ENCODE measurements at regions of chr7 and their contacts with region 1.

Region 1: DNA sequence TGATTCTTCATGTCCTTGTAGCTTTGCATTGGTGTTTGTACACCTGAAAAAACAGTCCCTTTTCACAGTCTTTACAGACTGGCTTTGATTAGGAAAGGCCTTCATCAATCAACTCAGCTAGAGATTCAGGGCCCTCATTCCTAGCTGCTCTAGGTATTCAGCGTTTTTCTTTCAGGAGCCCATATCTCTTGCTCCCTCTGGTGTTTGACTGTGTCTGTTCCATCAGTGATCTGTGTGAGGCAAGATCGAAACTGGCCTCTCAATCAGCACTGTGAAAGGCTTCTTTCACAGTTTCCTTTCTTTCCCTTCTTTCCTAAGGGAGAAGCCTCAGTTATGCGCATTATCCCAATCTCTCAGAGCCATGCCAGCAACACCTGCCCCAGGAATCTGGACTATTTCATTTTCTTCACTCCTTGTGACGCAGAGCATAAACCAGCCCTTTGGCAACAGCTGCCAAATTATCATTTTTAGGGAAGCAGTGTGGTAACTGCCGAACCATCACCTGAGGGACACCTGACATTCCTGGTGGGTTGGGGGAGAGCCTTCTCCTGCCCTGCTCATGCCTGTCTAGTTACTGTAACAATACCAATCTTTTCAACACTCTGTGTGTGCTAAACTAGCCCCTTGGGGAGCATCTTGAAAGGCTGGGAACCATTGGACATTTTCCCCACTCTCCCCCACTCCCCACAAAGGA is 75.7 kb upstream of the CCDC71L start:
- DNase-seq: peak; percentile 61 to 68 (median 63)
- H3K4me3 ChIP-seq: no peak overlapping the region
- H3K4me3 Mint-ChIP-seq: peak overlapping the region in 5 of 8 donors; percentile 3 to 61 (median 57)
- H3K27ac ChIP-seq: no peak overlapping the region
- H3K27ac Mint-ChIP-seq: peak overlapping the region in 5 of 7 donors; percentile 18 to 86 (median 72)
- H3K4me1 ChIP-seq: peaks cover 7% of the 10 kb centered on the region
- H3K4me1 Mint-ChIP-seq: peaks cover 8 to 18% (median 13%) of the 10 kb centered on the region in 4 donors
- H3K27me3 ChIP-seq: no peaks in the 10 kb centered on the region
- H3K27me3 Mint-ChIP-seq: no peaks in the 10 kb centered on the region

Region 2: DNA sequence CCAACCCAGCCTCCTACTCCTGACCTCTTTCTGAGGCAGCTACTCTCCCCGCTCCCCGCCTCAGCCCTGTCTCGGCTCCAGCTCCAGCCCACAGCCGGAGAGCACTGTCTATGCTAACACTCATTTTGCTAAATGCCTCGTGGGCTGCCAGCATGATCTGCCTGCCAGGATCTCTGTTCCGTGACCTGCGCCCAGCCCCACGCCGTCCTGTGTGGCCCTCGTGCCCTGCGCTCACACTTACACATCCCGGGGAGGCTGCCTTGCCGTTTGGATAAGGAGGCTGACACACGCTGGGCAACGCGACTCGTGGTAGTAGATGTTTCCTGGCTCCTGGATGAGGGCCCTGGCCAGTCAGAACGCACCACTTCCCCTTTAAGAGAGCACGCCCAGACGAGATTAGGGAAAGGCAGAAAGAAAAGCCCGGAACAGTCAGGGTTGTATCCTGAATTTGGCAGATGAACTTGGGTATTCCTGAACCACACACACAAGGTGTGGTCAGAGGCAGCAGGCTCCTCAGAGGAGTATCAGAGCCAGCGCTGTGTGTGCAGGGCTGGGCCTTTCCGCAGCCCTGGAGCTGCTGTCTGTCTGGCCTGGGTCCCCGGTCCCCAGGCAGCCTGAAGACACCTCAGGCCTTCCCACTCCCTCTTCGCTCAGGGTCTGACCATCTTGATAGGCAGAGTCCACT is 1057.7 kb before region 1 on chr7:
- CTCF ChIA-PET with region 1: no interaction called
- POLR2A ChIA-PET with region 1: no interaction called
- intact Hi-C with region 1: no loop called
- DNase-seq: peak in 2 of 5 donors; percentile 17 to 27
- H3K4me3 ChIP-seq: peak overlapping the region; percentile 12 to 27
- H3K4me3 Mint-ChIP-seq: peak overlapping the region; percentile 86 to 95 (median 92)
- H3K27ac ChIP-seq: peak overlapping the region; percentile 83
- H3K27ac Mint-ChIP-seq: peak overlapping the region; percentile 90 to 99 (median 96)
- H3K4me1 ChIP-seq: peaks cover 63% of the 10 kb centered on the region
- H3K4me1 Mint-ChIP-seq: peaks cover 61 to 94% (median 74%) of the 10 kb centered on the region in 4 donors
- H3K27me3 ChIP-seq: no peaks in the 10 kb centered on the region
- H3K27me3 Mint-ChIP-seq: no peaks in the 10 kb centered on the region

Region 3: DNA sequence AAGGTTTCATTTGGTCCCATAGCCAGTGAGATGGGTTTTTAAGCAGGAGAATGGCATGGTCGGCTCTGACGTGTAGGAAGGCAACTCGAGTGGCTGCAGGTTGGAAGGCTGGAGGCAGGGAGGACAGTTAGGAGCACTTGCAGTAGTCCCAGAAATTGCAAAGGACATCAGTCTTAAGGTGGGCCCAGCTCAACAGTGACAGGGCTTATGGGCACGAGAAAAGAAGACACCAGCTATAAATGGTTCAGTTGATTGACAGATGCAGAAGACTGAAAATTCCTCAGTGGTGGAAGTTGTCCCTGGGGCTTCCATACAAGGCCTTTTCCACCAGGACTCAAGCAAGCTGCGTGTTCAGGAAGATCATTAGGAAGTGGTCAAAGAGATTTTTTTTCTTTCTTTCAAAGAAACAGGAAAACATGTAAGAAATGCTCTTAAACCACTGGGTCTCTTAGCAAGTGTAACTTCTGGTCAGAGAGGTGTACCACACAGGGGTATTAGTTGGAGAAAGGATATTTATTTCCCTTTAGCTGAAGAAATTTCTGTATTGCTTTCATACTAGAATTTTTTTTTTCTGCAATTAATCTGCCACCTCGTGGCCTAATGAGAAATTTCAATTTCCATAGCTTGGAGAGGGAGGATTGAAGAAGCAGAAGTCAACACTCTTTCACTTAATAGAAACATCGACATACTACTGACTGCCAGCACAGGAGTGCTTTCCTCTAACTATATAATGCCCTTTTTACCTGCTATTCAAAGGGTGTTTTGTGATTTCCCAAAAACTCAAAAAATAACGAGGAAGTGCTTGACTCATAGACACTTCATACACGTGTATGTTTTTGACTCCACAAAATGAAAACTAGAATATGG is 274.4 kb before region 1 on chr7:
- CTCF ChIA-PET with region 1: interaction called, 3 read pairs
- POLR2A ChIA-PET with region 1: no interaction called
- intact Hi-C with region 1: loop called (anchors 2 kb)
- DNase-seq: peak in 4 of 5 donors; percentile 15 to 33 (median 24)
- H3K4me3 ChIP-seq: no peak overlapping the region
- H3K4me3 Mint-ChIP-seq: no peak overlapping the region
- H3K27ac ChIP-seq: no peak overlapping the region
- H3K27ac Mint-ChIP-seq: no peak overlapping the region
- H3K4me1 ChIP-seq: no peaks in the 10 kb centered on the region
- H3K4me1 Mint-ChIP-seq: peaks cover 0 to 2% (median 0%) of the 10 kb centered on the region in 4 donors
- H3K27me3 ChIP-seq: no peaks in the 10 kb centered on the region
- H3K27me3 Mint-ChIP-seq: no peaks in the 10 kb centered on the region

Region 4: GRCh38 chr7:106542550-106543220 is 194.0 kb before region 1 on chr7:
- CTCF ChIA-PET with region 1: interaction called, 55 read pairs
- POLR2A ChIA-PET with region 1: no interaction called
- intact Hi-C with region 1: loop called (anchors 1 kb)
- DNase-seq: peak; percentile 29 to 61 (median 37)
- H3K4me3 ChIP-seq: no peak overlapping the region
- H3K4me3 Mint-ChIP-seq: peak overlapping the region in 1 of 8 donors; percentile 2
- H3K27ac ChIP-seq: no peak overlapping the region
- H3K27ac Mint-ChIP-seq: peak overlapping the region in 5 of 7 donors; percentile 5 to 74 (median 13)
- H3K4me1 ChIP-seq: peaks cover 6% of the 10 kb centered on the region
- H3K4me1 Mint-ChIP-seq: peaks cover 9 to 16% (median 12%) of the 10 kb centered on the region in 4 donors
- H3K27me3 ChIP-seq: no peaks in the 10 kb centered on the region
- H3K27me3 Mint-ChIP-seq: no peaks in the 10 kb centered on the region

Region 5: GRCh38 chr7:106717955-106718871 is 18.4 kb before region 1 on chr7:
- CTCF ChIA-PET with region 1: interaction called, 22 read pairs
- POLR2A ChIA-PET with region 1: interaction called, 11 read pairs
- intact Hi-C with region 1: no loop called
- DNase-seq: peak; percentile 40 to 82 (median 57)
- H3K4me3 ChIP-seq: peak overlapping the region in 1 of 2 donors; percentile 3
- H3K4me3 Mint-ChIP-seq: no peak overlapping the region
- H3K27ac ChIP-seq: no peak overlapping the region
- H3K27ac Mint-ChIP-seq: no peak overlapping the region
- H3K4me1 ChIP-seq: peaks cover 30% of the 10 kb centered on the region
- H3K4me1 Mint-ChIP-seq: peaks cover 0 to 16% (median 12%) of the 10 kb centered on the region in 4 donors
- H3K27me3 ChIP-seq: no peaks in the 10 kb centered on the region
- H3K27me3 Mint-ChIP-seq: peaks cover 0 to 1% of the 10 kb centered on the region in 2 donors